ENCODE measurements at regions of chr18 and their contacts with region 1.

Region 1: DNA sequence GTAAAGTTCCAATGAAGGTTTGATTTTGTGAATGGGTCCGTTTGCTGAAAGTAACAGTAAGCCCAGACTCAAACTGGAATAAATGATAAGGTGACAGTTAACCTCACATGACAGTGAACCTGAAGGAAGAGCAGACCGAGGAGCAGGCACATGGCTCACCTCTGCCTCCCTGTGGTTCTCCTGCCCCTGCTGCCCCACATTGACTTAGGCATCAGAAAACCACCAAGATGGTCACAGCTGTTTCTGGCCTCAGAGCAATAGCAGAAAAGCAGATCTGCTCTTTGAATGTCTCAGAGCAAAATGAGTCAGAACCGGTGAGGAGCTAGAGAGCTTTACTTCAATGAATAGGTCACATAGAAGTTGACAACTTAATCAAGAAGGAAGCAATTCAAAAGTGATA is 487.6 kb downstream of the METTL4 start:
- DNase-seq: no peak

Region 2: GRCh38 chr18:1954583-1955312 is 128.9 kb before region 1 on chr18:
- intact Hi-C with region 1: loop called in 1 of 2 experiments (anchors 5 kb)
- DNase-seq: no peak

Region 3: GRCh38 chr18:2482706-2483439 is 399.2 kb after region 1 on chr18:
- intact Hi-C with region 1: no loop called
- DNase-seq: no peak

Measured in posterior vena cava (tissue), 2 donors.